CD4-positive, alpha-beta T cell (primary cell): ENCODE measurements at regions of chr6 and their contacts with region 1.

Region 1: DNA sequence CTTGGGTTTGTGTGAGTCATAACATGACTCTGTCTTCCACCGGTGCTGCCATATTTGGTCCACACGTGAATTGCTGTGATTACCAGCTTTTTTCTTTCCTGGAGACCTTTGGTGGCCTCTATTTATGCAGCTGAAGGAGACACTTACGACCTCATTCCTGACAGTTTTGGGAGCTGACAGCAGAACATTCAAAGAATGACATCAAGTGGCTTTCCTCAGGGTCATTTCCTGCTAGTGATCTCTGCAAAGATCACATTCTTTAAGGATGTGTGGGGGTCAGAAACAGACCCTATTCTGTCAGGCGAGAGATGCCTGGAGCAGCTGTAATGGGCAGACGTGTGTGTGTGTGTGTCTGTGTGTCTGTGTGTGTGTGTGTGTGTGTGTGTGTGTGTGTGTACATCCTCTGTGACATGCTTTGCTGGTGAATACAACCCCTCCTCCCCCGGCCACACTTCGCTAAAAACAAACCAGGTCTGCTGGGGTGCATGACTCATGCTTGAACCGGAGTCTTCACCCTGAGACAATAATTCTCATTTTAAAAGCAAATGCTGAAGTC is 115.6 kb downstream of the TMEM170B start:
- DNase-seq: peak in 12 of 14 experiments; percentile 4 to 68 (median 35)
- ATAC-seq: peak; percentile 57
- H3K4me3 ChIP-seq: no peak overlapping the region
- H3K4me3 Mint-ChIP-seq: no peak overlapping the region
- H3K27ac ChIP-seq: no peak overlapping the region
- H3K27ac Mint-ChIP-seq: no peak overlapping the region
- H3K4me1 ChIP-seq: peaks cover 2% of the 10 kb centered on the region
- H3K4me1 Mint-ChIP-seq: no peaks in the 10 kb centered on the region
- H3K27me3 ChIP-seq: no peaks in the 10 kb centered on the region
- H3K27me3 Mint-ChIP-seq: no peaks in the 10 kb centered on the region
- CTCF ChIP-seq: no peak

Region 2: DNA sequence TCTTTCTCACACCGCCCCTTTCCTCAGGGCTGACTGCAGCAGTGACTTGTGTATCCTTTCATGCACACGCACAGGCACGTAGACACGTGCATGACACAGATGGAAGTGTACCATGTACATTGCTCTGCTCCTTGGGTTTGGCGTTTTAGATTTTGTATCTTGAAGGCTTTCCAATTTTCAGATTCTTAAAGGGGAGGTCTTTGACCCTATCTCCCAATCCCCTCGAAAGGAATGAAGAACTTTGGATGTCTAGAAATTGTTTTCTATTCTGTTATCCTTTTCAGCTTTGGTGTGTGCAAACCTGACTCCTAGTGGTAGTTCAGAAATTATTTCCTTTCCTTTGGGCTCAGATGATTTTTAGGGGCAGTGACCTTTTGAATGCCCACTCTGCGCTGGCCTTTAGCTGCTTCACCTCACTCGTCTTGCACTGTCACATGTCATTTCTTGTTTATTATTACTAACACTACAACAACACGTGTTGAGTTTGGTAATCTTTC is 422.0 kb after region 1 on chr6:
- CTCF ChIA-PET with region 1: no interaction called
- POLR2A ChIA-PET with region 1: no interaction called
- intact Hi-C with region 1: loop called (anchors 2 kb)
- DNase-seq: peak in 5 of 14 experiments; percentile 7 to 53 (median 29)
- ATAC-seq: peak; percentile 91
- H3K4me3 ChIP-seq: no peak overlapping the region
- H3K4me3 Mint-ChIP-seq: no peak overlapping the region
- H3K27ac ChIP-seq: no peak overlapping the region
- H3K27ac Mint-ChIP-seq: no peak overlapping the region
- H3K4me1 ChIP-seq: peaks cover 5% of the 10 kb centered on the region
- H3K4me1 Mint-ChIP-seq: peaks cover 66% of the 10 kb centered on the region
- H3K27me3 ChIP-seq: no peaks in the 10 kb centered on the region
- H3K27me3 Mint-ChIP-seq: no peaks in the 10 kb centered on the region
- CTCF ChIP-seq: peak; percentile 60

Region 3: GRCh38 chr6:12289933-12290820 is 637.1 kb after region 1 on chr6 and contains the start of gene EDN1:
- CTCF ChIA-PET with region 1: interaction called, 3 read pairs
- POLR2A ChIA-PET with region 1: no interaction called
- intact Hi-C with region 1: loop called (anchors 1 kb)
- DNase-seq: peak in 13 of 14 experiments; percentile 9 to 67 (median 30)
- ATAC-seq: peak; percentile 82
- H3K4me3 ChIP-seq: peak within 1 kb of the TSS; percentile 49
- H3K4me3 Mint-ChIP-seq: peak within 1 kb of the TSS; percentile 89
- H3K27ac ChIP-seq: no peak within 1 kb of the TSS
- H3K27ac Mint-ChIP-seq: no peak within 1 kb of the TSS
- H3K4me1 ChIP-seq: peaks cover 12% of the 10 kb centered on the region
- H3K4me1 Mint-ChIP-seq: peaks cover 20% of the 10 kb centered on the region
- H3K27me3 ChIP-seq: peaks cover 26 to 34% of the 10 kb centered on the region in 2 experiments
- H3K27me3 Mint-ChIP-seq: peaks cover 57% of the 10 kb centered on the region
- CTCF ChIP-seq: peak; percentile 9
- total RNA-seq, gene EDN1: 0.80 to 1.1 TPM

Region 4: DNA sequence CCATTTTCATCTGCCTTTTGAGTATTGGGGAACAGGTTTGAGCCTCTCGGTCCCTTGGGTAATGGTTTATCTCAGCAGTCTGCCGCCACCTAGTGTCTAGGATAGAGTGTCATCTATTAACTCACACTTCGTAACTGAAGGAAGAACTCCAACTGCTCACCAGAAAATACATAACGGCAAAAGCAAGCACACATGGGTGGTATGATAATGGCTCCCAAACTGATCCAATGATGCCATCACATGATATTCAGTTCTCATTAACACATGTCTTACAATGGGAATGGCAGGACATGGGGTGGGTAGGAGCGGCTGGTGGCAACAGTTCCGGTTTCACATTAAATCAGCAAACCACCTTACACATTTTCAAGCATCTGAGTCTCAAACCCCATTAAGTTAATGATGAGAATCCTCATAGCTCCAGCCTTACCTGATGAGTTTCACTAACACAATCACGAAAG is 952.8 kb after region 1 on chr6:
- CTCF ChIA-PET with region 1: interaction called, 3 read pairs
- POLR2A ChIA-PET with region 1: no interaction called
- intact Hi-C with region 1: loop called (anchors 1 to 2 kb)
- DNase-seq: peak in 7 of 14 experiments; percentile 3 to 63 (median 34)
- ATAC-seq: no peak
- H3K4me3 ChIP-seq: no peak overlapping the region
- H3K4me3 Mint-ChIP-seq: no peak overlapping the region
- H3K27ac ChIP-seq: no peak overlapping the region
- H3K27ac Mint-ChIP-seq: no peak overlapping the region
- H3K4me1 ChIP-seq: no peaks in the 10 kb centered on the region
- H3K4me1 Mint-ChIP-seq: no peaks in the 10 kb centered on the region
- H3K27me3 ChIP-seq: peaks cover 0 to 9% of the 10 kb centered on the region in 2 experiments
- H3K27me3 Mint-ChIP-seq: peaks cover 27% of the 10 kb centered on the region
- CTCF ChIP-seq: peak; percentile 50

Region 5: DNA sequence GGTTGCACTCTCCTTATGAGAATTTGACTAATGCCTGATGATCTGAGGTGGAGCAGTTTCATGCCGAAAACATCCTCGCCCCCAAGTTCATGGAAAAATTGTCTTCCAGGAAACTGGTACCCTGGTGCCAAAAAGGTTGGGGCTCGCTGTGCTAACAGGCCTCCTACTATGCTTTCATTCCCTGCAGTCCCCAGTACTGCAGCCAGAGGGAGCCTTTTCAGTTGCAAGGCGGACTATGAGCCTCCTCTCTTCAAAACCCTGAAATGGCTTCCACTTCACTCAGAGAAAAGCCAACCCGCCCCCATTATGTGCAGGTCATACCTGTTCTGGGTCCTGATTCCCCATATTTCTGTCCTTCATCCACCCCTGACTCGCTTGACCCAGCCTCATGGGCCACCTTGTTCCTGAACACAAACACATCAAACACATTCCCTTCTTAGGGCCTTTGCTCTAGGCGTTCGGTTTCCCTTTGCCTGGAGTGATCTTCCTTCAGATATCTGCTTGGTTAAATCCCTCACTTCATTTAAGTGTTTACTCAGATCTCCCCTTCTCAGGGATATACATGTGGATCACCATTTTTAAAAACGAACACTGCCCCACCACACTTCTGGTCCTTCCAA is 1237.2 kb after region 1 on chr6:
- CTCF ChIA-PET with region 1: no interaction called
- POLR2A ChIA-PET with region 1: no interaction called
- intact Hi-C with region 1: loop called (anchors 2 to 5 kb)
- DNase-seq: peak in 4 of 14 experiments; percentile 1 to 20 (median 9)
- ATAC-seq: no peak
- H3K4me3 ChIP-seq: no peak overlapping the region
- H3K4me3 Mint-ChIP-seq: no peak overlapping the region
- H3K27ac ChIP-seq: no peak overlapping the region
- H3K27ac Mint-ChIP-seq: no peak overlapping the region
- H3K4me1 ChIP-seq: peaks cover 2% of the 10 kb centered on the region
- H3K4me1 Mint-ChIP-seq: no peaks in the 10 kb centered on the region
- H3K27me3 ChIP-seq: peaks cover 0 to 8% of the 10 kb centered on the region in 2 experiments
- H3K27me3 Mint-ChIP-seq: peaks cover 27% of the 10 kb centered on the region
- CTCF ChIP-seq: no peak

Region 6: DNA sequence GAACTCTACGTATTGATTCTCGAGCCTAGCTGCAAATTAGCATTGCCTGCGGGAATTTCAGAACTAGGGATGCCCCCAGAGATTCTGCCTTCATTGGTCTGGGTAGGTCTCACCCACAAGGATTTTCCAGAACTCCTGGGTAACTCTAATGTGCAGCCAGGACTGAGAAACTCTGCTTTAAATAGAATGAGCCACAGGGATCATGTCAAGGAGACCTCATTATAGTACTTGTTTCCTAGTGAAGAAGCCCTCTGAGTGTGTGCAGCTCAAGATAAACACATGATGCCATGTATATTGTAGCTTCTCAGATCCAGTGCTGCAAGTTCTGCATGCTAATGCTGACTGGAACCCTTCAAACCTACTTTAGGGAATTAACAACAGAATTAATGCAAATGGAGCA is 1242.6 kb after region 1 on chr6:
- CTCF ChIA-PET with region 1: no interaction called
- POLR2A ChIA-PET with region 1: no interaction called
- intact Hi-C with region 1: loop called (anchors 2 to 5 kb)
- DNase-seq: no peak
- ATAC-seq: no peak
- H3K4me3 ChIP-seq: no peak overlapping the region
- H3K4me3 Mint-ChIP-seq: no peak overlapping the region
- H3K27ac ChIP-seq: no peak overlapping the region
- H3K27ac Mint-ChIP-seq: no peak overlapping the region
- H3K4me1 ChIP-seq: peaks cover 2% of the 10 kb centered on the region
- H3K4me1 Mint-ChIP-seq: no peaks in the 10 kb centered on the region
- H3K27me3 ChIP-seq: peaks cover 0 to 10% of the 10 kb centered on the region in 2 experiments
- H3K27me3 Mint-ChIP-seq: peaks cover 42% of the 10 kb centered on the region
- CTCF ChIP-seq: no peak